Activated CD4-positive, alpha-beta T cell treated with anti-CD3 and anti-CD28 coated beads for 36 hours (primary cell): ENCODE measurements at regions of chr4 and their contacts with region 1.

Region 1: DNA sequence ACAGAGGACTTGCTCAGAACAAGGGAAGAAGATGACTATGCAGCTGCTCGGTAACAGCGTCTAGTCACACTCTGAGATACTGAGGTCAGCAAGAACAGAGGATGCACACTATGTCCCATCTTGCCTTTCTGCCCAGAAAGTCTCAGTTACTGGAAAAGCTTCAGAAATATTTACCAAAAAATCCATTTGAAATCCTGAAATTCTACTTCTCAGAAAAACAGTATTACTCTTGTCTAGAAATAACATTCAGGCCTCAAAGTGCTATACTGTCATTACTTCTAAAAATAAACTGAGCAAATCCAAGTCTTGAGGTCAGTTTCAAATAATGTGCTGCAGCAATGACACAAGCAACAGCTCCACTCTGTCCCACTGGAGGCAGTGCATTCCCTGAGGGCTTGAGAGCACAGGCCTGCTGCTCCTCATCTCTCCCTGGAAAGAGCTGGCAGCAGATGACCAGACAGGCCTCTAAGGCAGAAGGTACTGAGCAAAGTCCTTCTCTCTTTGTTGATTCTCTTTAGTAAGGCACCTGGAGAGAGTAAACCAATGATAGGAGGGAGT is 76.9 kb downstream of the CAMK2D start:
- DNase-seq: peak; percentile 67
- ATAC-seq: peak; percentile 83
- H3K4me3 Mint-ChIP-seq: peak overlapping the region; percentile 32
- H3K27ac Mint-ChIP-seq: peak overlapping the region; percentile 95
- H3K4me1 Mint-ChIP-seq: peaks cover 84% of the 10 kb centered on the region
- H3K27me3 Mint-ChIP-seq: no peaks in the 10 kb centered on the region

Region 2: GRCh38 chr4:113445286-113445685 is 239.3 kb before region 1 on chr4:
- CTCF ChIA-PET with region 1: interaction called, 3 read pairs
- POLR2A ChIA-PET with region 1: no interaction called
- intact Hi-C with region 1: loop called (anchors 1 to 5 kb)
- DNase-seq: no peak
- ATAC-seq: no peak
- H3K4me3 Mint-ChIP-seq: no peak overlapping the region
- H3K27ac Mint-ChIP-seq: peak overlapping the region; percentile 85
- H3K4me1 Mint-ChIP-seq: peaks cover 27% of the 10 kb centered on the region
- H3K27me3 Mint-ChIP-seq: no peaks in the 10 kb centered on the region

Region 3: DNA sequence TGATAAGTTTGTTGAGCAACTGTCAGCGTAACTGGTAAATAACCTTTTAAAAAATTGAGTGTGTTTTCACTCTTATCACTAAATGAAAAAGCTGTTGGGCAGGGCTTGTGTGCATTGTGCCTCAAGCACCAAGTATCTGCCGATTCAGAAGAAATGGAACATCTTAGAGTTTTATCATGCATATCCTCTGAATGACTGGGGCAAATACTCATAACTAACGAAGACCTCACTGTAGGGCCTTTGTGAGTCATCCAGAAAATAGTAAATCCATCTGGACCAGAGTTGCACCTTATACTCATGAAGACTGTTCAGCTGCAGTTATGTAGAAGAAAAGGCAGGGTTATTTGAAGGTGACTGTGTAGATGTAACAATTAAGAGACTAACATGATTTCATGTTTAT is 145.2 kb before region 1 on chr4:
- CTCF ChIA-PET with region 1: interaction called, 6 read pairs
- POLR2A ChIA-PET with region 1: no interaction called
- intact Hi-C with region 1: loop called (anchors 1 kb)
- DNase-seq: peak; percentile 50
- ATAC-seq: peak; percentile 87
- H3K4me3 Mint-ChIP-seq: no peak overlapping the region
- H3K27ac Mint-ChIP-seq: peak overlapping the region; percentile 83
- H3K4me1 Mint-ChIP-seq: peaks cover 34% of the 10 kb centered on the region
- H3K27me3 Mint-ChIP-seq: no peaks in the 10 kb centered on the region

Region 4: DNA sequence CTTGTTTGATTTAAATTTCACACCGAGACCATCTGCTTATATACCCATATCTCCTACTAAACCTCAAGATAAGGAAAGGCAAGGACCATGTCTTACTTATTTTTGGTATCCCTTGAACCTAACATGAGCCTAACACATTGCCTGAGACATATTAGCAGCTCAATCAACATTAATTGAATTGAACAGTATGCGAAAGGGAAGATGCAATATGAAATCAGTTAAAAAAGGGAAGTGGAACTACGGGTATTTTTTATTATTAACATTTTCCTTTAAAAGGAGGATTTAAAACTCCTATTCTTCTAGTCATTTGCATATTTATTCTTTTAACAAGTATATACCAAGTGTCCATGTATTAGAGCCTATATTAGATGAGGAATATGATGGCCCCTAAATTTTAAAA is 120.1 kb before region 1 on chr4:
- CTCF ChIA-PET with region 1: interaction called, 3 read pairs
- POLR2A ChIA-PET with region 1: no interaction called
- intact Hi-C with region 1: loop called in 1 of 2 experiments (anchors 5 kb)
- DNase-seq: no peak
- ATAC-seq: no peak
- H3K4me3 Mint-ChIP-seq: no peak overlapping the region
- H3K27ac Mint-ChIP-seq: peak overlapping the region; percentile 17
- H3K4me1 Mint-ChIP-seq: peaks cover 39% of the 10 kb centered on the region
- H3K27me3 Mint-ChIP-seq: no peaks in the 10 kb centered on the region

Region 5: DNA sequence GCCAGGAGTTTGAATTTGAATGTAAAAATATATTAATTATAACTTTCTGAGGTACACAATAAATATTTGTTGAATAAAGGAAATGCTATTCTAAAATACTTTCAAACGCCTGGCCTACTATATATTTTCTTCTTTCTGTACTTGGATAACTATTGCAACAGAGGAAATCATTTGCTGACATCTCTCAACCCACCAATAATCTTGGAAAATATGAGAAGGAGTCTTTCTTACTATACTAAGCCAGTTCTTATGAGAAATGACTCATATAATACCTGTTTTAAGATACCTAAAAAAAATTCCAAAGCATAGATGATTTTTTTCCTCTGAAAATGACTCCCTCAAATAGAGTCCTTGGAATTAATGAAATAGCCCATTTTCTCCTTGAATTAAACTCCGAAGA is 12.8 kb after region 1 on chr4:
- CTCF ChIA-PET with region 1: interaction called, 5 read pairs
- POLR2A ChIA-PET with region 1: no interaction called
- intact Hi-C with region 1: loop called (anchors 1 kb)
- DNase-seq: no peak
- ATAC-seq: peak; percentile 48
- H3K4me3 Mint-ChIP-seq: no peak overlapping the region
- H3K27ac Mint-ChIP-seq: peak overlapping the region; percentile 71
- H3K4me1 Mint-ChIP-seq: peaks cover 42% of the 10 kb centered on the region
- H3K27me3 Mint-ChIP-seq: no peaks in the 10 kb centered on the region

Region 6: DNA sequence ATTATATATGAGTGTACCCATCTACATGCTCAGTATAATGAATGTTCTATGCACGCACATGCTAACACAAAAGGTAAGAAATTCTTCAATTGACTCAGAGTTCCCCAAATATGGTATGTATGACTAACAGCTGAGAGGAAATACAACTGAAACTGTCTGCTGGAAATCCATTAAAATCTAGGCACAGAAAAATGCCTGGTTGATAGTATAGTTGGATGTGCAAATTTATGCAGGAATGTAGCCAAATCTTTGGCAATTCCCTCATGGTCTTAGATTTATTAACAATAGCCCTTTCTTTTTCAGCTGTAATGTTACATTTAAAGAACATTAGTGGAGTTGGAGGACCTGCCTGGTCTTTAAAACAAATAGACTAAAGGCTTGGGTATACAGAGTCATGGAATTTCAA is 71.4 kb after region 1 on chr4:
- CTCF ChIA-PET with region 1: no interaction called
- POLR2A ChIA-PET with region 1: interaction called, 4 read pairs
- intact Hi-C with region 1: loop called (anchors 1 kb)
- DNase-seq: no peak
- ATAC-seq: peak; percentile 78
- H3K4me3 Mint-ChIP-seq: peak overlapping the region; percentile 28
- H3K27ac Mint-ChIP-seq: peak overlapping the region; percentile 79
- H3K4me1 Mint-ChIP-seq: peaks cover 48% of the 10 kb centered on the region
- H3K27me3 Mint-ChIP-seq: no peaks in the 10 kb centered on the region